Activated T-helper 1 cell treated with anti-CD3 and anti-CD28 coated beads, Interleukin-12 subunit alpha, Interleukin-12 subunit beta, Interleukin-2, Interleukin-4 antibody, amounts not matched to agents 30 ng/mL and 10 ng/mL and 1 ng/mL, durations not matched to agents 14 hours and 24 hours and 36 hours (primary cell): ENCODE measurements at regions of chr12 and their contacts with region 1.

Region 1: DNA sequence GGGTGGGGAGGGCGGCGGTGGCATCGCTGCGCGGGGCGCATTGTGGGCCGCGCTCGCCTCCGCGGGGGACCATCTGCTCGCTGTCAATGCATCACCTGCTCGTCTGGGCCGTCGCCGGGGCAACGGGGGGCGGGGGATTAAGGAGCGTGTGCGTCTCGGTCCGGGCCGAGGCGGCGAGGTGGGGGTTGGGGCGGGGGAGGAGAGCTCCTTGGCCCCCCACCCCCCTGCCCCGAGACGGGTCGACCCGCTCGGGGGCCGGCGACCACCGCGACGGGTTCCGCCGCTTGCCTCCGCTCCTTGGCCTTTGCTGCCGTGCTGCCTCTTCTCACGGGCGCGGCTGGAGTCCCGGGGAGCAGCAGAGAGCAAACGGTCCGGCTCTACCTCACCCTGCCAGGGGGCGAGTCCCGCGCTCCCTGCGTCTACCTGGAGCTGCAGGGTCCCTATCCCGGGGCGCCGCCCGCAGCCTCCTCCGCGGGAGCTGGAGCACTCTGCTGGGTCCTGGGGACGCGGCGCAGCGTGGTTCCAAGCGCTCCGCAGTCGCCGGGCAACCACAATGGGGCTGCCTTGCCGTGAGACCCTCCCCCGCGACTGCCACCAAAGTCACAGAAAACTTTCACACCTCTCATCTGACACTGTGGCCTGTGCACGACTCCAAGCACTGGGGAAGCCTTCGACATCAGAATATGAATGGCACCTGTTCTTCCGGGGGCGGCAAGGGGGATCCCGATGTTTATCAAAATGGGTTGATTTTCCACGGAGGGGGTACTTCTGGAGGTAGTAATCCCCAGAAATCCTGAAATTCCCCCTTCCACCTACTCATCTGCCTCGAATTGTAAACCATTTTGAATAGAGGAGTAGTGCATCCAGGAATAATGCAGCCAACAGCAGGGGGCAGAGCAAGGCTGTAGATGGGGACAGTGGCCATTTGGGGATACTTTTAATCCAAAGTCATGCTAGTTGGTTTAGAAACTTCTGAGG is at the start of gene C12orf42:
- DNase-seq: peak; percentile 16
- H3K4me3 Mint-ChIP-seq: peak within 1 kb of the TSS; percentile 70
- H3K27ac Mint-ChIP-seq: peak within 1 kb of the TSS; percentile 53
- H3K4me1 Mint-ChIP-seq: peaks cover 27% of the 10 kb centered on the region
- H3K27me3 Mint-ChIP-seq: peaks cover 28% of the 10 kb centered on the region
- total RNA-seq, gene C12orf42: not detected in 2 replicates

Region 2: DNA sequence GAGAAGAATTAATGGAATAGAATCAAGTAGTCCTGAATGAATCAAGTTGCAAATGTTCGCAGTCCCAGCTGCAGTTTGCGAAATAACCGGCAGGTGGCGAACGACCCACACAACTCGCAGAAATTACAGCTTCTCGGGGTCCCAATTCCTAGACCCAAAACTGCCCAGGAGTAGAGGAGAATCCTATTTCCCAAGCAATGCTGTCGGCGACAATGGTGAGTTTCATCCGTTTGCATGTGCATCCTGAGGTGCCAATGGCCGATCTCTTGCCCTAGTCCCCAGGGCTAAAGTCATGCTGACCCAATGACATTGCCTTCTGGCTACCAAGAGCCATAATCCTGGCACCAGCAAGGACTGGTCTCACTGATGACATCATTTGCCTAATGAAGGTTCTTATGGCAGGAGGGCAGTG is 546.8 kb before region 1 on chr12:
- intact Hi-C with region 1: loop called (anchors 1 kb)
- DNase-seq: no peak
- H3K4me3 Mint-ChIP-seq: no peak overlapping the region
- H3K27ac Mint-ChIP-seq: no peak overlapping the region
- H3K4me1 Mint-ChIP-seq: peaks cover 21% of the 10 kb centered on the region
- H3K27me3 Mint-ChIP-seq: peaks cover 45% of the 10 kb centered on the region

Region 3: GRCh38 chr12:103455020-103455763 is 40.6 kb before region 1 on chr12:
- intact Hi-C with region 1: loop called (anchors 5 kb)
- DNase-seq: peak; percentile 16
- H3K4me3 Mint-ChIP-seq: peak overlapping the region; percentile 2
- H3K27ac Mint-ChIP-seq: peak overlapping the region; percentile 13
- H3K4me1 Mint-ChIP-seq: peaks cover 63% of the 10 kb centered on the region
- H3K27me3 Mint-ChIP-seq: peaks cover 5% of the 10 kb centered on the region

Region 4: DNA sequence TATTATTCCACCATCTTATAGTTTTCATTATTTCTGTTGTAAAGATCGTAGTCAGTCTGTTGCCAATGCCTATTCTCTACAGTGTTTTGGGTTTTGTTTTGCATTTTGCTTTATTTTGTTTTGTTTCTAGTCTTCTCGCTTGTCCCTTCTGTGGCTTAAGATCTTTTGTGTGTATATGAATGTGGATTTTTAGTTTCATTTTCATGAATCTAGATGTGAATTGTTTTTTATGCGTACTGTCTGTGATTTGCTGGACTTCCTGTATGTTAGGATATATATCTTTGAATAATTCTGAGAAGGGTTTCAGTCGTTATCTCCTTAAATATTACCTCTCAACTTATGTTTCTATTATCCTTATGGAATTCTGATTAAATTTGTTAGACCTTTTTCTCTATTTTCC is 13.4 kb before region 1 on chr12:
- intact Hi-C with region 1: loop called (anchors 1 kb)
- DNase-seq: no peak
- H3K4me3 Mint-ChIP-seq: peak overlapping the region; percentile 1
- H3K27ac Mint-ChIP-seq: no peak overlapping the region
- H3K4me1 Mint-ChIP-seq: peaks cover 6% of the 10 kb centered on the region
- H3K27me3 Mint-ChIP-seq: peaks cover 2% of the 10 kb centered on the region

Region 5: GRCh38 chr12:103596981-103597380 is 101.2 kb after region 1 on chr12:
- intact Hi-C with region 1: no loop called
- DNase-seq: no peak
- H3K4me3 Mint-ChIP-seq: no peak overlapping the region
- H3K27ac Mint-ChIP-seq: no peak overlapping the region
- H3K4me1 Mint-ChIP-seq: no peaks in the 10 kb centered on the region
- H3K27me3 Mint-ChIP-seq: no peaks in the 10 kb centered on the region

Region 6: DNA sequence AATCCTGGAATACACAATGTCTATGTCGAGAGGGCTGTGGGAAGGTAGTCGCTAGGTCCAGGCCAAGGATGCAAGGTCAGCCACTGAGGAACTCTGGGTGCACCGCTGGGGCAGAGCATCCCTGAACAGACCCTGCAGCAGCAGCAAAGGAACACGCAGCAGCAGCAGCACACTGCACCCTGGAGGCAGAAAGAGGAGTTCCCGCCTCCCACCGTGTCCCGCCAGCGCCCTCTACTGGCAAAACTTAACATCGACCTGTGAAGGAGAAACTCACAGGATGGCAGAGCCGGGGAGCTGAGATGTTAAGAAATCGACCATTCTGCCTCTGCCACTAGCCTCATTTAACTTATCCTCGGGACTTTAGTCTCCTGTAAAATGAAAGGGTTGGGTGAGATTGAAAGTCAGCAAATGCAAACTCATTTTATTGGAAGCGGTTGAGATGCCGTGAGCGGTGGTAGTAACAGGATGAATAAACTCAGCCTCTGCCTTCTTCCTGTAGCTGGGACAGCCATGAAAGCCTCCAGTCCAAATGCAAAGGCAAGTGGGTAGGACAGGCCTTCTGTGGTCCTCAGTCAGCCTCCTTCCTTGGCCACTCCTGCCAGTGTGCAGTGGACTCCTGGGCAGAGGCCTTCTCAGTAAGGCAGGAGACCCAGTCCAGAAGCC is 136.9 kb after region 1 on chr12:
- intact Hi-C with region 1: loop called (anchors 2 kb)
- DNase-seq: peak; percentile 55
- H3K4me3 Mint-ChIP-seq: no peak overlapping the region
- H3K27ac Mint-ChIP-seq: no peak overlapping the region
- H3K4me1 Mint-ChIP-seq: no peaks in the 10 kb centered on the region
- H3K27me3 Mint-ChIP-seq: peaks cover 17% of the 10 kb centered on the region

Region 7: GRCh38 chr12:104303538-104304151 is 807.9 kb after region 1 on chr12 and contains the start of gene EID3:
- intact Hi-C with region 1: no loop called
- DNase-seq: peak; percentile 92
- H3K4me3 Mint-ChIP-seq: peak within 1 kb of the TSS; percentile 93
- H3K27ac Mint-ChIP-seq: peak within 1 kb of the TSS; percentile 99
- H3K4me1 Mint-ChIP-seq: peaks cover 66% of the 10 kb centered on the region
- H3K27me3 Mint-ChIP-seq: no peaks in the 10 kb centered on the region
- total RNA-seq, gene EID3: 10.5 and 10.6 TPM in 2 replicates